ENCODE measurements at regions of chr2 and their contacts with region 1.

Region 1: GRCh38 chr2:215002500-215002899 is 135.9 kb downstream of the ABCA12 start:
- DNase-seq: peak; percentile 19 to 57 (median 27)
- ATAC-seq: peak; percentile 71
- H3K4me3 ChIP-seq: no peak overlapping the region
- H3K27ac ChIP-seq: no peak overlapping the region
- H3K4me1 ChIP-seq: no peaks in the 10 kb centered on the region
- H3K27me3 ChIP-seq: no peaks in the 10 kb centered on the region
- CTCF ChIP-seq: peak; percentile 33 to 60 (median 46); a peak in 5 of 6 replicates
- EP300 ChIP-seq: no peak
- POLR2A ChIP-seq: no peak
- RAD21 ChIP-seq: peak; percentile 47 to 55

Region 2: GRCh38 chr2:213251618-213252017 is 1750.9 kb before region 1 on chr2:
- CTCF ChIA-PET with region 1: no interaction called
- POLR2A ChIA-PET with region 1: no interaction called
- in situ Hi-C with region 1: no loop called
- intact Hi-C with region 1: loop called (anchors 5 kb)
- DNase-seq: peak; percentile 24 to 59 (median 40)
- ATAC-seq: peak; percentile 74
- H3K4me3 ChIP-seq: no peak overlapping the region
- H3K27ac ChIP-seq: no peak overlapping the region
- H3K4me1 ChIP-seq: no peaks in the 10 kb centered on the region; a peak in 1 of 5 replicates
- H3K27me3 ChIP-seq: no peaks in the 10 kb centered on the region
- CTCF ChIP-seq: peak; percentile 4 to 58 (median 37); a peak in 3 of 6 replicates
- EP300 ChIP-seq: no peak
- POLR2A ChIP-seq: no peak
- RAD21 ChIP-seq: peak; percentile 65 to 77

Region 3: DNA sequence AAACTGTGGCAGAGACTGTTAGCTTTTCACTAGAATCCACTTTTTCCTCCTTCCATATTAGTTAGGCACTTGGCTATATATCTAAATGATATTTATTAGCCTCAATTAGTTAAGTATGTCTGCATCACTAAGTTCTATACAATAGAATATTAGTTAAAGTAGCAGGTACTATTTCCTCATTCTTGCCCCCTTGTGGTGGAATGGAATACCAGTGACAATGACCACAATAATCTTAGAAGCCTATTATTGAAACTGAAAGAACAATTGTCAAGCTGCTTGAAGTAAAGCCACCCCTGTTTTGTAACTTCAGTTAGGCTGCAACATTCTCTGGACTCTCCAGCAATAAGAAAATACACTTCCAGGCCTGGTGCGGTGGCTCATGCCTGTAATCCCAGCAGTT is 1067.9 kb before region 1 on chr2:
- CTCF ChIA-PET with region 1: no interaction called
- POLR2A ChIA-PET with region 1: no interaction called
- in situ Hi-C with region 1: no loop called
- intact Hi-C with region 1: loop called (anchors 5 kb)
- DNase-seq: peak in 2 of 4 experiments; percentile 1 to 2
- ATAC-seq: no peak
- H3K4me3 ChIP-seq: no peak overlapping the region
- H3K27ac ChIP-seq: no peak overlapping the region
- H3K4me1 ChIP-seq: no peaks in the 10 kb centered on the region
- H3K27me3 ChIP-seq: no peaks in the 10 kb centered on the region
- CTCF ChIP-seq: peak in 1 of 3 experiments; percentile 11; a peak in 1 of 6 replicates
- EP300 ChIP-seq: no peak
- POLR2A ChIP-seq: no peak
- RAD21 ChIP-seq: peak in 1 of 2 experiments; percentile 23; a peak in 2 of 4 replicates

Region 4: GRCh38 chr2:214865363-214865762 is 137.1 kb before region 1 on chr2:
- CTCF ChIA-PET with region 1: no interaction called
- POLR2A ChIA-PET with region 1: no interaction called
- in situ Hi-C with region 1: no loop called
- intact Hi-C with region 1: no loop called
- DNase-seq: no peak
- ATAC-seq: no peak
- H3K4me3 ChIP-seq: no peak overlapping the region
- H3K27ac ChIP-seq: no peak overlapping the region
- H3K4me1 ChIP-seq: no peaks in the 10 kb centered on the region
- H3K27me3 ChIP-seq: no peaks in the 10 kb centered on the region
- CTCF ChIP-seq: no peak
- EP300 ChIP-seq: no peak
- POLR2A ChIP-seq: no peak
- RAD21 ChIP-seq: no peak

Region 5: GRCh38 chr2:214946949-214947348 is 55.6 kb before region 1 on chr2:
- CTCF ChIA-PET with region 1: no interaction called
- POLR2A ChIA-PET with region 1: no interaction called
- in situ Hi-C with region 1: no loop called
- intact Hi-C with region 1: no loop called
- DNase-seq: no peak
- ATAC-seq: no peak
- H3K4me3 ChIP-seq: no peak overlapping the region
- H3K27ac ChIP-seq: no peak overlapping the region
- H3K4me1 ChIP-seq: no peaks in the 10 kb centered on the region
- H3K27me3 ChIP-seq: no peaks in the 10 kb centered on the region
- CTCF ChIP-seq: no peak
- EP300 ChIP-seq: no peak
- POLR2A ChIP-seq: no peak
- RAD21 ChIP-seq: no peak

Region 6: GRCh38 chr2:215269397-215270119 is 267.1 kb after region 1 on chr2:
- CTCF ChIA-PET with region 1: no interaction called
- POLR2A ChIA-PET with region 1: no interaction called
- in situ Hi-C with region 1: no loop called
- intact Hi-C with region 1: loop called (anchors 10 kb)
- DNase-seq: peak; percentile 56 to 86 (median 60)
- ATAC-seq: peak; percentile 75
- H3K4me3 ChIP-seq: no peak overlapping the region
- H3K27ac ChIP-seq: peak overlapping the region; percentile 74
- H3K4me1 ChIP-seq: no peaks in the 10 kb centered on the region; a peak in 2 of 5 replicates
- H3K27me3 ChIP-seq: no peaks in the 10 kb centered on the region
- CTCF ChIP-seq: peak; percentile 44 to 68 (median 58); a peak in 5 of 6 replicates
- EP300 ChIP-seq: no peak
- POLR2A ChIP-seq: no peak
- RAD21 ChIP-seq: peak; percentile 32 to 39; a peak in 3 of 4 replicates

Region 7: DNA sequence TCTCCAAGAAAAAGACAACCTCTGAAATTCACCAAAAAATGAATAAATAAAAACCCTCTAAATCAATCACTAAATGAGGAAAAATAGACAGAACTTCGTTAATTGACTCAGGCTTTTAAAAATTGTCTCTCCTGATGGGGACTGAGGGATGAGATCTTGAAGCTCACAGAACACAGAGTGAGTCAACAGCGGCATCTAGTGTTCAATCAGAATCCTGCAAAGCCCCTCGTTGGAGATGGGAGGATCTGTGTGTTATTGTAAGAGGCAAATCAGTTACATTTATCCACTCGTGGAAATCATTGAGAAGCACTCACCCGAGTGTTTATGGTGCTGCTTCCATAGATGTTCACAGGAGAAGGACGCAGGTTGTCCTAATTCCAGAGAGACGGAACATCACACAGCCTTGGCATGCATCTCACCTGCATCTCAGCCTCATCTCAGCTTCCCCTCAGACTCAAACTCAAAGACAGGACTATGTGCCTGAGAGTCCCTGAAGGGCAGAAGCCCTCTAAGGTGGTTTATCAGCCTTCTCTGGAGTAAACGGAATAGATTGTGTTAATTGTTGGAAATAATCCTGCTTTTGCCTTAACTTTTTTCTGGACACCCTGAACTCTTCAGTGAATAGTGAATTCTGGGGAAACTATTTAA is 928.9 kb after region 1 on chr2:
- CTCF ChIA-PET with region 1: no interaction called
- POLR2A ChIA-PET with region 1: no interaction called
- in situ Hi-C with region 1: no loop called
- intact Hi-C with region 1: loop called (anchors 5 kb)
- DNase-seq: peak; percentile 49 to 78 (median 54)
- ATAC-seq: peak; percentile 91
- H3K4me3 ChIP-seq: no peak overlapping the region
- H3K27ac ChIP-seq: no peak overlapping the region
- H3K4me1 ChIP-seq: peaks cover 0 to 16% of the 10 kb centered on the region in 2 experiments; a peak in 3 of 5 replicates
- H3K27me3 ChIP-seq: no peaks in the 10 kb centered on the region
- CTCF ChIP-seq: peak; percentile 67 to 82 (median 80)
- EP300 ChIP-seq: no peak
- POLR2A ChIP-seq: no peak
- RAD21 ChIP-seq: peak; percentile 87 to 88